CD8-positive, alpha-beta T cell (primary cell): ENCODE measurements at regions of chr11 and their contacts with region 1.

Region 1: DNA sequence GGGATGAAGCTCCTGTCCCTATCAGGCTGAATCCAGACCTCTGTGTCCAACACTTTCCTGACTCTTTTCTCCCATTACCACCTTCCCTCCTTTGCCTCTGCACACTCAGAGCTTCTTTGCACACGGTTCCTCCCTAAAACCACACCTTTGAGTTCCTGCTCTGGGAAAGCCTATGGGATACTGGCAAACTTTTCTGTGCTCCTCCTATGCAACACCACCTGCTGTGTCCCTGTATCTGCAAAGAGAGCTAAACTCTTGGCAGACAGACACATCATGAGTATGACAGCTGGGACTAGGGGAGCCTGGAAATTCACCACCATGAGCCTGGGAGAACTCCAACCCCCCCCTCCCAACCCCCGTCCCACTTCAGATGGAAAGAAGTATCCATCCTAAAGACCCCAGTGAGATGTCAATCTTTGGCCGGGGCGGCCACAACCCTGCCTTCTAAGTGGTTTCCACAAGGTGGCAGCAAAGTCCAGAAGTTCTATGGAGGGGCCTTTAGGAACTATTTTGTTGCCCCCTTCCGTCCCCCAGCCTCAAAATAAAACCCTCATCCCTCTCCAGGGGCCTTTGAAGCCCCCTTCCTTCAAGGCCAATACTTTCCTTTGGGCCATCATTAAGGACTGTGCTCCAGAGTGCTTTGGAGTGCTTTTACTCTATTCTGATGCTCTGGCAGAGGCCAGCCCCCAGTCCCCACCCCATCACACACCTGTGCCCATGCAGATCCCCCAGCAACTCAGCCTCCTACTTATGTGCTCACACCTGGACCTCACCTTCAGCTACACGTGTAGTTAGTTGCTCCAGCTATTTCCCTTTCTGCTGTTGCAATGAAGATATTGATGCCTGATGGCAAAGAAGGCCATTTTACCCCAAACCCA is 19.4 kb downstream of the HTR3A start:
- DNase-seq: peak; percentile 10 to 65 (median 41)
- ATAC-seq: no peak
- H3K4me3 ChIP-seq: no peak overlapping the region
- H3K4me3 Mint-ChIP-seq: no peak overlapping the region
- H3K27ac ChIP-seq: no peak overlapping the region
- H3K27ac Mint-ChIP-seq: no peak overlapping the region
- H3K4me1 ChIP-seq: no peaks in the 10 kb centered on the region
- H3K4me1 Mint-ChIP-seq: no peaks in the 10 kb centered on the region
- H3K27me3 ChIP-seq: peaks cover 0 to 2% of the 10 kb centered on the region in 2 experiments
- H3K27me3 Mint-ChIP-seq: peaks cover 28% of the 10 kb centered on the region
- CTCF ChIP-seq: peak; percentile 80

Region 2: GRCh38 chr11:113896156-113896879 is 98.0 kb before region 1 on chr11:
- CTCF ChIA-PET with region 1: interaction called, 14 read pairs
- POLR2A ChIA-PET with region 1: no interaction called
- intact Hi-C with region 1: loop called in 1 of 2 experiments (anchors 1 kb)
- DNase-seq: peak in 8 of 9 experiments; percentile 18 to 62 (median 35)
- ATAC-seq: peak; percentile 42
- H3K4me3 ChIP-seq: no peak overlapping the region
- H3K4me3 Mint-ChIP-seq: no peak overlapping the region
- H3K27ac ChIP-seq: no peak overlapping the region
- H3K27ac Mint-ChIP-seq: no peak overlapping the region
- H3K4me1 ChIP-seq: no peaks in the 10 kb centered on the region
- H3K4me1 Mint-ChIP-seq: peaks cover 2% of the 10 kb centered on the region
- H3K27me3 ChIP-seq: no peaks in the 10 kb centered on the region
- H3K27me3 Mint-ChIP-seq: no peaks in the 10 kb centered on the region
- CTCF ChIP-seq: peak; percentile 70

Region 3: GRCh38 chr11:114036156-114036811 is 42.0 kb after region 1 on chr11:
- CTCF ChIA-PET with region 1: interaction called, 18 read pairs
- POLR2A ChIA-PET with region 1: no interaction called
- intact Hi-C with region 1: no loop called
- DNase-seq: peak; percentile 7 to 80 (median 56)
- ATAC-seq: peak; percentile 54
- H3K4me3 ChIP-seq: no peak overlapping the region
- H3K4me3 Mint-ChIP-seq: no peak overlapping the region
- H3K27ac ChIP-seq: no peak overlapping the region
- H3K27ac Mint-ChIP-seq: no peak overlapping the region
- H3K4me1 ChIP-seq: peaks cover 9% of the 10 kb centered on the region
- H3K4me1 Mint-ChIP-seq: peaks cover 3% of the 10 kb centered on the region
- H3K27me3 ChIP-seq: peaks cover 0 to 3% of the 10 kb centered on the region in 2 experiments
- H3K27me3 Mint-ChIP-seq: peaks cover 7% of the 10 kb centered on the region
- CTCF ChIP-seq: peak; percentile 59

Region 4: DNA sequence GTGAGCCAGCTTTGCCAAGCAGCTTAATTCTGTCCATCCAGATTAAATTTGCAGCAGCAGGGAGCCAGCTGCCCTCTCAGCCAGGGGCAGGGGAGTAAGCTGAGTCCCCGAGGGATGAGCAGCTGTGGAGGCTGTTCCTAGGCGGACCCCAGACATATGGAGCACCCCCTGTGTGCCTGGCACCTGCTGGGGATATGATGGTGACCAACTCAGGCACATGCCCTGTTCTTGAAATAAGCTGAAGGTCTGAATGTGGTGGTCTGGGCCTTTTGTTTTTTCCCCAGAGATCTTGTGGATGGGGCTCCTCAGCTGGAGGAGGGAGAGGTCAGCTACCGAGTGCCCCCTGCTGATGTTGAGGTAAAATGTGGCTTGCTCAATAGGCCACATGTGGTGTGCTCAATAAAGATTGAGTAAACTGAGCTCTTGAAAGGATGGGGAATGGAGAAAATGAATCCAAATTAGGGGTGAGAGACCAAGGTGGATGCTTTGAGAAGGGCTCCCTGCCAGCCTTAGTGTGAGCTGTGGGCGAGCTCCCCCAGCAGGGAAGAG is 198.6 kb after region 1 on chr11:
- CTCF ChIA-PET with region 1: interaction called, 11 read pairs
- POLR2A ChIA-PET with region 1: no interaction called
- intact Hi-C with region 1: loop called (anchors 1 kb)
- DNase-seq: peak in 2 of 9 experiments; percentile 24 to 31
- ATAC-seq: no peak
- H3K4me3 ChIP-seq: no peak overlapping the region
- H3K4me3 Mint-ChIP-seq: no peak overlapping the region
- H3K27ac ChIP-seq: no peak overlapping the region
- H3K27ac Mint-ChIP-seq: no peak overlapping the region
- H3K4me1 ChIP-seq: no peaks in the 10 kb centered on the region
- H3K4me1 Mint-ChIP-seq: peaks cover 44% of the 10 kb centered on the region
- H3K27me3 ChIP-seq: no peaks in the 10 kb centered on the region
- H3K27me3 Mint-ChIP-seq: no peaks in the 10 kb centered on the region
- CTCF ChIP-seq: no peak

Region 5: GRCh38 chr11:114197799-114198500 is 203.6 kb after region 1 on chr11:
- CTCF ChIA-PET with region 1: interaction called, 11 read pairs
- POLR2A ChIA-PET with region 1: no interaction called
- intact Hi-C with region 1: loop called (anchors 1 kb)
- DNase-seq: no peak
- ATAC-seq: no peak
- H3K4me3 ChIP-seq: no peak overlapping the region
- H3K4me3 Mint-ChIP-seq: no peak overlapping the region
- H3K27ac ChIP-seq: no peak overlapping the region
- H3K27ac Mint-ChIP-seq: peak overlapping the region; percentile 22
- H3K4me1 ChIP-seq: no peaks in the 10 kb centered on the region
- H3K4me1 Mint-ChIP-seq: peaks cover 24% of the 10 kb centered on the region
- H3K27me3 ChIP-seq: no peaks in the 10 kb centered on the region
- H3K27me3 Mint-ChIP-seq: no peaks in the 10 kb centered on the region
- CTCF ChIP-seq: no peak

Region 6: DNA sequence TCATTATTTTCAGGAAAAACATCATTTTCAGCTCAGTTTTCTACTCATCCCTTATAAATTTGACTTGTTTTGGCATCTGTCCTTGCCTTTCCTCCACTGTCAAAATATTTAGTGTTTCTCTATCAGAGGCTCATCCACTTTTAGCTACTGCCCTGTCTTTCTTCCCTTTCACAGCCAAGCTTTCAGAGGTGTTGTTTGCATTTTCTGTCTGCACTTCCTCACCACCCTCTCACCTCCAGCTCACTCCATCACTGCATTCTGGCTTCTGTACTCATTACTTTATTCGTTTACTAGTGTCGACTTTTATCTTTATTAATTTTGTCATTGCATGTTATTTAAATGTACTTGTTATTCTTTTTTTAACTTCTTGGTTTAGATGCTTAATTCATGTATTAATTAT is 275.2 kb after region 1 on chr11:
- CTCF ChIA-PET with region 1: interaction called, 357 read pairs
- POLR2A ChIA-PET with region 1: no interaction called
- intact Hi-C with region 1: no loop called
- DNase-seq: no peak
- ATAC-seq: no peak
- H3K4me3 ChIP-seq: no peak overlapping the region
- H3K4me3 Mint-ChIP-seq: no peak overlapping the region
- H3K27ac ChIP-seq: no peak overlapping the region
- H3K27ac Mint-ChIP-seq: no peak overlapping the region
- H3K4me1 ChIP-seq: no peaks in the 10 kb centered on the region
- H3K4me1 Mint-ChIP-seq: no peaks in the 10 kb centered on the region
- H3K27me3 ChIP-seq: no peaks in the 10 kb centered on the region
- H3K27me3 Mint-ChIP-seq: peaks cover 31% of the 10 kb centered on the region
- CTCF ChIP-seq: no peak